ENCODE measurements at regions of chr1 and their contacts with region 1.

Region 1: DNA sequence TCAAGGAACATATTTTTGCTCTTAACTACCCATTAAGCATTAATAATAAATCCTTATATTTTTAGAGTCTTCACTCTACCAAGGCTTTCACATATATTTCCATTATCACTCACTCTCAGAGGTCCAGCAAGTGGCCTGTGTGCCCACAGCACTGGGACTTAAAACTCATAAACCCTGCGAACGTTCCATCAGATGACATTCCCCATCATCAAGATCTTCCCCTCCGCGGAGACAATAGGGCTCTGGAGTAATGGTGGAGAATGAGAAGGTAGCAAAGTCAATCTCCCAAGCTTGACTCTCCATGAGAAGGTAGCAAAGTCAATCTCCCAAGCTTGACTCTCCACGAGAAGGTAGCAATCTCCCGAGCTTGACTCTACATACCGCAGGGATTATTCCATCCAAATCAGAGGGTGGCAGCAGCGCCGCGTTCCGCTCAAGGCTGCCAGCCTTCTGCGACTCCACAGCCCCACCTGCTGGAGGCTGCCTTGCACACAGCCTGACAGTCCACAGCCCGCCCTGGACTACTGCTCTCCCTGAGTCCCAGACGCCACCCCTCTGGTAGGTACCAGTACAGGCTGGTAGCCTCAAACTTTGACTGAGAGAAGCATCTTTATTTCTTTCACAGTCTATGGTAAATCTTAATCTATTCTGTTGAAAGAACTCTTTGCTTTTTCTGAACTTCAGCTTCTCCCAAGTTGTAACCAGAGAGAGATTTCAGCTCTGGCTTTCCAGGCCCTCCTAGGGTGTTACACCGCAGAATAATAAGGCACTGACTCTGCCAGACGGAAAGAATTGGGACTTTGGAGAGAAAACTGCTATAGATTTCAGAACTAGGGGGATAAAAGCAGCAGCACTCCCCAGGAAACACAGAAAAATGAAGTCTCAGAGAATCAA is 26.4 kb upstream of the CTTNBP2NL start:
- DNase-seq: peak; percentile 95

Region 2: GRCh38 chr1:112358798-112359408 is 10.7 kb before region 1 on chr1:
- CTCF ChIA-PET with region 1: interaction called, 10 read pairs
- POLR2A ChIA-PET with region 1: no interaction called
- DNase-seq: peak; percentile 76

Region 3: DNA sequence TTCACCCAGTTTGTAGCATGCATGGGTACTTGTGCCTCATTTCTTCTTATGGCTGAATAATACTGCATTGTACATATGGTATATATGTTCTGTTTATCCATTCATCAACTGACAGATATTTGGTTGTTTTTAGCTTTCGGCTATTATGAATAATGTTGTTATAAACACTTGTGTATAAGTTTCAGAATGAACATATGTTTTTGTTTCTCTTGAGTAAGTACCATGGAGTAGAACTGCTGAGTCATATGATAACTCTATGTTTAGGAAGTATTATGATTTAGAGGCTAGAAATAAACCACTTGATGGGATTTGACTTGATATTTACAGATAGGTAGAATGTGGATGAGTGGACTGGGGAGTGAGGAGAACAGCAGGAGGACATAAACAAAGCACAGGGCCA is 187.7 kb after region 1 on chr1:
- CTCF ChIA-PET with region 1: no interaction called
- POLR2A ChIA-PET with region 1: no interaction called
- DNase-seq: no peak

Region 4: DNA sequence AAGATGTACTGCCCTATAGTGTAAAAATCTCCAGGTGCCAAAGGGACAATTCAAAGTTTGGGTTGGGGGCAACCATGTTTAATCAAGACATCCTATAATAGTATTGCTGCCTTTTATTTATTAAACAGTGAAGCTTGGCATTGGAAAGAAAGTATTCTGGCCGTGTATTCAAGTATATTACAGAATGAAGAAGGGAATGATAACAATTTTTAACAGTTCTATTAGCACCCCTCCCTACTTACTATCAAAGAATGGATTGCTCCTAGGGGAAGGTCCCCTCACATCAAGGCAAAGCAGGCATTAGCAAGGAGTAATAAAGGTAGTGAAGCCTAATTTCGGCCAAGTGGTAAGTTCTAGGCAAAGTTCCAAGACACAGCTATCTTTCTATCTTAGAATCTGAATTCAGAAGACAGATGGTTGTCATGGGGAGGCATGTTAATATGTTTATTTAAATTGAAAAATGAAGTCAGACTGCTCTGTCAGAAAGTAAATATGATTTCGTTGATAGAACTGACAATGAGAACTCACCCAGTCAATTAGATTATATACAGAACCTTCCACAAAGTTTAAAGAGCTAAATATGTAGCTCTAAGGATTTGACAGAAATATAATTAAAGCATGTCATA is 224.7 kb after region 1 on chr1:
- CTCF ChIA-PET with region 1: no interaction called
- POLR2A ChIA-PET with region 1: no interaction called
- DNase-seq: no peak